ENCODE measurements at regions of chr12 and their contacts with region 1.

Region 1: GRCh38 chr12:104219908-104220530 is 4.4 kb downstream of the TXNRD1 start:
- DNase-seq: peak; percentile 74
- H3K4me3 Mint-ChIP-seq: no peak overlapping the region
- H3K27ac Mint-ChIP-seq: peak overlapping the region; percentile 6
- H3K4me1 Mint-ChIP-seq: peaks cover 48% of the 10 kb centered on the region
- H3K27me3 Mint-ChIP-seq: peaks cover 12% of the 10 kb centered on the region

Region 2: DNA sequence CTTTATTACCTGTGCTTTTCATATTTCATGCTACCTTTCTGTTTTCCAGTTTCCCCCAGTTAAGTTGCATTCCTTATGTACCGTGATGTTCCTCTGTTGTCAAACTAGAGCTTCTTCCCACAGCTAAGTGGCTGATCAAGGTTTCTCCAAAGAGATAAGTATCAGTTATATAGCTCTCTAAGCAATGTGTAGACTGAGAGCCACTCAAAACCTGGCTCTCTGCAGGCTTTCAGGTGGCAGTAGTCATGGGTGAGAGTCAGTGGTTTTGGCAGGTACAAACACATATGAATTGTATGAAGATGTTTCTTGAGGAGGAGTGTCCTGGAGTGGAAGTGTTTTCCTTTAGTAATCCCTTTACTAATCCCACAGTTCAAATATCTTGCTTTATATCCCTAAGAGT is 24.0 kb after region 1 on chr12:
- CTCF ChIA-PET with region 1: interaction called, 11 read pairs
- POLR2A ChIA-PET with region 1: no interaction called
- DNase-seq: no peak
- H3K4me3 Mint-ChIP-seq: no peak overlapping the region
- H3K27ac Mint-ChIP-seq: no peak overlapping the region
- H3K4me1 Mint-ChIP-seq: no peaks in the 10 kb centered on the region
- H3K27me3 Mint-ChIP-seq: peaks cover 13% of the 10 kb centered on the region

Region 3: DNA sequence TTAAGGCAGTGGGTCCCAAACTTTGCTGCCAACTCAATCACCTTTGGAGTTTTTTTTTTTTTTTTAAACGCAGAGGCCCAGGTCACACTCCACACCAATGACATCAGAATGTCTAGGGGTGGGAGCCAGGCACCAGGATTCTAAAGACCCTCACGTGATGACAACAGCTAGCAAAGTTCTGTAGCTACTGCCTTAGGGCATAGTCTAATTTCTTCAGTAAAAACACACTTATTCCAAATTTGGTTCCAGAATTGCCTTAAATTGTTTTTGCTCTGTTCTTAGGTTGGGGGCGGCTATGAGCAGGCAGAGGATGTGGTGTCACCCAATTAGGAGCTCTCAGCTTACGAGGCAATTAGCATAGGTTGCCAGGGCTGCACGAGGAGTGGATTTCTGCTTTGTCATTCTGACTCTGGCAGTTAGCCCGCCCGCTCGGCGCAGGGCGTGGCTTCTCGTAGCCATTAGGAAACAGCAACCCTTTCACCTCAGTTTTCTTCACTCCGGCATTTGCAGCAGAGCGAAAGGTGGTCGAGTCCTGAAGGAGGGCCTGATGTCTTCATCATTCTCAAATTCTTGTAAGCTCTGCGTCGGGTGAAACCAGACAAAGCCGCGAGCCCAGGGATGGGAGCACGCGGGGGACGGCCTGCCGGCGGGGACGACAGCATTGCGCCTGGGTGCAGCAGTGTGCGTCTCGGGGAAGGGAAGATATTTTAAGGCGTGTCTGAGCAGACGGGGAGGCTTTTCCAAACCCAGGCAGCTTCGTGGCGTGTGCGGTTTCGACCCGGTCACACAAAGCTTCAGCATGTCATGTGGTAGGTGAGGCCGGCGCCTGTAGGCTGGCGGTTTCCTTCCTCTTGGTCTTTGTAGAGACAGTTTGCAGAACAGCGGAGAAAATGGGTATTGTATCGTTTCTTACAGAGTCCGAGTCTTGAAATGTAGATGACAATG is 66.8 kb after region 1 on chr12:
- CTCF ChIA-PET with region 1: interaction called, 11 read pairs
- POLR2A ChIA-PET with region 1: interaction called, 3 read pairs
- DNase-seq: peak; percentile 95
- H3K4me3 Mint-ChIP-seq: peak overlapping the region; percentile 94
- H3K27ac Mint-ChIP-seq: peak overlapping the region; percentile 97
- H3K4me1 Mint-ChIP-seq: peaks cover 26% of the 10 kb centered on the region
- H3K27me3 Mint-ChIP-seq: no peaks in the 10 kb centered on the region